GM12878 (cell line): ENCODE measurements at regions of chr6 and their contacts with region 1.

Region 1: DNA sequence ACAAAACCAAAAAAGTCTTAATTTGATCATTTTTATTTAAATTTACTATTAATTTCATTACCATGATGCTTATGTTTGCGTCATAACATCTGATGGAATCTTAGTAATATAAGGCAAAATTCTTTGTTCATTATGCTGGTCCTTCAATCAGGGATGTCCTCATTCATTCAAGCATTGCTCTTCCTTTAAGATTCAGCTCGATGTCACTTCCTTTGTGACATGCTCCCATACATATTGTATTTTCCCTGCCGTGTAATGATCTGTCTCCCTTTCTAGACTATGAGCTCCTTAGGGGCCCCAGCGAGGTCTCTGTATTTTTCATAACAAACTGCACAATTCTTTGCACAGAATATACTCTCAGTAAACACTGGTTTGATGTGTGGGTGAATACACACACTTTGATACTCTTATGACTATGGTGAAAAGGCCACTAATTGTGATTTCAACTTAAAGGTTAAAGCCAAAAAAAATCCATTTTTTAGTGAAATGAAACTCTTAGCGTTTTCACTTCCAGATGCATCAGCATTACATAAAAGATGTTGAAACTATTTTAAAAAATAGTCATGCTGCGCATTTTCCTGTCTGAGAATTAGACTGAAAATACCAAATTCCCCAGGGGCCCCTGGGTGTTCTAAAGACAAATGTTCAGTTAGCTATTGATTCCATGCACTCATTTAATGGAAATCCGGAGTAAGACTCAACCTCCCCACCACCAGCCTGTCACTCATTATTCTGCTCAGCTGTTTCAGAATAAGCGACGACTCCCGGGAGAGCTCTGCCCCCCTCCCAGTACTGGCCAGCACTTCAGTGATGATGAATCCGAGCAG is 169.7 kb downstream of the ATXN1 start:
- DNase-seq: peak; percentile 85
- ATAC-seq: peak; percentile 90
- H3K4me3 ChIP-seq: peak overlapping the region; percentile 43; the same call in 1 of the 2 replicates
- H3K27ac ChIP-seq: peak overlapping the region; percentile 89
- H3K4me1 ChIP-seq: peaks cover 31% of the 10 kb centered on the region
- H3K27me3 ChIP-seq: no peaks in the 10 kb centered on the region
- CTCF ChIP-seq: no peak
- EP300 ChIP-seq: peak; percentile 90 to 96; a peak in 3 of 4 replicates
- POLR2A ChIP-seq: no peak
- RAD21 ChIP-seq: no peak; the same call in 1 of the 2 replicates

Region 2: DNA sequence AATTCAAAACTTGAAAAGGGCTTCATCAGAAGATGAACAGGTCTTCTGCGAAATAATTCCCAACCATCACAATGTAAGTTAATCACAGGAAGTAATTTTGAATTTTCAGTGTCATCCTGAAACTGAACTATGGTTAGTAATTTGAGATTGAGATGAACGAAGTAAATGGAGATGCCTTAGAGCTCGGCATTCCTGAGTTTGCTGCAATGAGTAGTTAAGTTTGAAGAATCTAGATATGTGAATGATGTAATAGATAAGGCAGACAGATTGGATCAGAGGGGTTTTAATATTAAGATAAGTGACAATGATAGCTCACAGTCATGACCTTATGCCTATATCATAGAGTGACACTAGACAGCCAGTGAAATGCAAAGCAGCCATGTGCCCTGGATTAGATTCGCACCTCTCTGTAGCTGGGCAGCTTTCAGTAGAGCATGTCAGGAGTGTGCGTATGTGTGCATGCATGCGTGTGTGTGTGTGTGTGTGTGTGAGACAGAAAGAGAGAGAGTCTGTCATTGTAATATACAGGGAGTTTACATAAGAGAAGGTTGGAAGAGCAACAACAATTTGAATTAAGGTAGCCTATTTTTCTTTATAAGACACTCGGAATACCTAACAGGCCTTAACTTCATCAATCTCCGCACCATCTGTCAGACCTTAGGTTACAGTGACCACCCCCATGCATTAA is 120.2 kb before region 1 on chr6:
- CTCF ChIA-PET with region 1: interaction called, 4 read pairs
- POLR2A ChIA-PET with region 1: interaction called, 4 read pairs
- RAD21 ChIA-PET with region 1: interaction called, 7 read pairs
- SMC1A ChIA-PET with region 1: interaction called, 12 read pairs
- in situ Hi-C with region 1: loop called (anchors 5 kb)
- intact Hi-C with region 1: loop called (anchors 5 kb)
- DNase-seq: peak; percentile 76
- ATAC-seq: peak; percentile 71
- H3K4me3 ChIP-seq: 0 out of 2 replicates have a peak overlapping the region, but pooled peaks have one; percentile 9
- H3K27ac ChIP-seq: peak overlapping the region; percentile 90
- H3K4me1 ChIP-seq: peaks cover 71% of the 10 kb centered on the region
- H3K27me3 ChIP-seq: no peaks in the 10 kb centered on the region
- CTCF ChIP-seq: no peak
- EP300 ChIP-seq: peak; percentile 74 to 81; a peak in 3 of 4 replicates
- POLR2A ChIP-seq: peak; percentile 47; the same call in 1 of the 2 replicates
- RAD21 ChIP-seq: no peak

Region 3: GRCh38 chr6:16503970-16504415 is 87.6 kb before region 1 on chr6:
- CTCF ChIA-PET with region 1: no interaction called
- POLR2A ChIA-PET with region 1: interaction called, 3 read pairs
- RAD21 ChIA-PET with region 1: interaction called, 7 read pairs
- SMC1A ChIA-PET with region 1: interaction called, 25 read pairs
- in situ Hi-C with region 1: no loop called
- intact Hi-C with region 1: no loop called
- DNase-seq: peak; percentile 92
- ATAC-seq: peak; percentile 85
- H3K4me3 ChIP-seq: no peak overlapping the region; the same call in 1 of the 2 replicates
- H3K27ac ChIP-seq: peak overlapping the region; percentile 70
- H3K4me1 ChIP-seq: peaks cover 50% of the 10 kb centered on the region
- H3K27me3 ChIP-seq: no peaks in the 10 kb centered on the region
- CTCF ChIP-seq: no peak
- EP300 ChIP-seq: peak; percentile 85 to 90
- POLR2A ChIP-seq: no peak
- RAD21 ChIP-seq: no peak

Region 4: GRCh38 chr6:16602035-16602434 is 10.4 kb after region 1 on chr6:
- CTCF ChIA-PET with region 1: interaction called, 17 read pairs
- POLR2A ChIA-PET with region 1: no interaction called
- RAD21 ChIA-PET with region 1: interaction called, 23 read pairs
- SMC1A ChIA-PET with region 1: interaction called, 57 read pairs
- in situ Hi-C with region 1: no loop called
- intact Hi-C with region 1: no loop called
- DNase-seq: peak; percentile 53
- ATAC-seq: peak; percentile 94
- H3K4me3 ChIP-seq: no peak overlapping the region
- H3K27ac ChIP-seq: no peak overlapping the region
- H3K4me1 ChIP-seq: peaks cover 32% of the 10 kb centered on the region
- H3K27me3 ChIP-seq: no peaks in the 10 kb centered on the region
- CTCF ChIP-seq: no peak
- EP300 ChIP-seq: peak; percentile 34 to 69; a peak in 2 of 4 replicates
- POLR2A ChIP-seq: no peak
- RAD21 ChIP-seq: no peak

Region 5: GRCh38 chr6:16657768-16658167 is 66.2 kb after region 1 on chr6:
- CTCF ChIA-PET with region 1: interaction called, 3 read pairs
- POLR2A ChIA-PET with region 1: no interaction called
- RAD21 ChIA-PET with region 1: interaction called, 4 read pairs
- SMC1A ChIA-PET with region 1: interaction called, 19 read pairs
- in situ Hi-C with region 1: no loop called
- intact Hi-C with region 1: no loop called
- DNase-seq: no peak
- ATAC-seq: peak; percentile 76
- H3K4me3 ChIP-seq: peak overlapping the region; percentile 14; the same call in 1 of the 2 replicates
- H3K27ac ChIP-seq: peak overlapping the region; percentile 15; the same call in 1 of the 2 replicates
- H3K4me1 ChIP-seq: peaks cover 37% of the 10 kb centered on the region
- H3K27me3 ChIP-seq: no peaks in the 10 kb centered on the region
- CTCF ChIP-seq: no peak
- EP300 ChIP-seq: no peak; a peak in 1 of 4 replicates
- POLR2A ChIP-seq: no peak
- RAD21 ChIP-seq: no peak

Region 6: GRCh38 chr6:16676978-16677377 is 85.4 kb after region 1 on chr6:
- CTCF ChIA-PET with region 1: no interaction called
- POLR2A ChIA-PET with region 1: no interaction called
- RAD21 ChIA-PET with region 1: no interaction called
- SMC1A ChIA-PET with region 1: no interaction called
- in situ Hi-C with region 1: no loop called
- intact Hi-C with region 1: no loop called
- DNase-seq: no peak
- ATAC-seq: no peak
- H3K4me3 ChIP-seq: no peak overlapping the region
- H3K27ac ChIP-seq: no peak overlapping the region
- H3K4me1 ChIP-seq: peaks cover 4% of the 10 kb centered on the region; the same call in 1 of the 2 replicates
- H3K27me3 ChIP-seq: no peaks in the 10 kb centered on the region
- CTCF ChIP-seq: no peak
- EP300 ChIP-seq: no peak
- POLR2A ChIP-seq: no peak
- RAD21 ChIP-seq: no peak

Region 7: GRCh38 chr6:16712931-16713484 is 121.4 kb after region 1 on chr6:
- CTCF ChIA-PET with region 1: interaction called, 5 read pairs
- POLR2A ChIA-PET with region 1: no interaction called
- RAD21 ChIA-PET with region 1: interaction called, 5 read pairs
- SMC1A ChIA-PET with region 1: interaction called, 3 read pairs
- in situ Hi-C with region 1: no loop called
- intact Hi-C with region 1: loop called (anchors 2 kb)
- DNase-seq: no peak
- ATAC-seq: peak; percentile 71
- H3K4me3 ChIP-seq: no peak overlapping the region
- H3K27ac ChIP-seq: peak overlapping the region; percentile 40; the same call in 1 of the 2 replicates
- H3K4me1 ChIP-seq: peaks cover 18% of the 10 kb centered on the region
- H3K27me3 ChIP-seq: no peaks in the 10 kb centered on the region
- CTCF ChIP-seq: peak; percentile 25 to 56 (median 50)
- EP300 ChIP-seq: peak in 1 of 2 experiments; percentile 66; a peak in 1 of 4 replicates
- POLR2A ChIP-seq: no peak
- RAD21 ChIP-seq: peak; percentile 50

Region 8: GRCh38 chr6:16840725-16841124 is 249.1 kb after region 1 on chr6:
- CTCF ChIA-PET with region 1: no interaction called
- POLR2A ChIA-PET with region 1: no interaction called
- RAD21 ChIA-PET with region 1: no interaction called
- SMC1A ChIA-PET with region 1: no interaction called
- in situ Hi-C with region 1: no loop called
- intact Hi-C with region 1: no loop called
- DNase-seq: no peak
- ATAC-seq: peak; percentile 62
- H3K4me3 ChIP-seq: no peak overlapping the region
- H3K27ac ChIP-seq: peak overlapping the region; percentile 67
- H3K4me1 ChIP-seq: peaks cover 35% of the 10 kb centered on the region
- H3K27me3 ChIP-seq: no peaks in the 10 kb centered on the region
- CTCF ChIP-seq: no peak
- EP300 ChIP-seq: no peak
- POLR2A ChIP-seq: no peak
- RAD21 ChIP-seq: no peak